Heart left ventricle (tissue), 16 donors: ENCODE measurements at regions of chr13 and their contacts with region 1.

Region 1: DNA sequence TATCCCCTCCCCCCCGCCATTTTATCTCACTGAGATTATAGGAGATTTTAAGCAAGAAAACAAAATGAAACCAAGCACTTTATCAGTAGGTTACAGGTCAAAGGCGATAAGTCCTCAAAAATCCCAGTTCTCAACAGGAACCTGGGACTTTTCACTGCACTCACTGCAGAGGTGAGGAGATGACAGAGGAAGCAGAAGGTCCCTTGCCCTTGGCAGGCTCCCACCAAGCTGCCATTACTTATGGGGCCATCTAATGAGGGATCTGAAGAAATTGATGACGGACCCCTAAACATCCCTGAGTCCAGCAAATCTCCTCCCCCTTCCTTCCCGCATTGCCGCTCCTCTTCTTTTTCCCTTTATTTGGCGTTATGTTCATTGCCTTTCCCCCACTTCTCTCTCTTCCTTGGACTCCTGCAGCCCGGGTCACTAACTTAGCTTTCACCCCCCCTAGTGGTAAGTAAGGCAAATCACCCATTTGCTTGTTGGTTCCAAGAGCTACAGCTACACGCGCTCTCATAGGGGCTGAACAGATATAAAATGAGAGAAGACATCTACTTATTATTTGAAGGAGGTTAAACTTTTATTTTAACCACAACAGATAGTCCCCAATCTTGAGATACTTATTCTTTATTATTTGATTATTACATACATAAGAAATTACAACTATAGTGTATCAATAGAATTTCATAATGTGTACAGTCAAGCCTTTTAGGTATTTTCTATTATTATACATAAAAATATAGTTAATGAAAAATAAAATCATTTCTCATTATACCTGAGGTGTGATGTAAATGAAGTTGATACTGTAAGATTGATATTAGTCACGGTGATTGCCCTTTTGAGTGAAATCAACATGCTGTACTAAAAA is 52.0 kb upstream of the ARGLU1 start:
- DNase-seq: peak in 2 of 5 donors; percentile 34 to 46
- ATAC-seq: peak; percentile 88 to 93 (median 89)
- H3K4me3 ChIP-seq: peak overlapping the region in 8 of 12 donors; percentile 18 to 38 (median 32)
- H3K27ac ChIP-seq: peak overlapping the region in 8 of 12 donors; percentile 8 to 65 (median 42)
- H3K4me1 ChIP-seq: peaks cover 0 to 20% (median 5%) of the 10 kb centered on the region in 12 donors
- H3K27me3 ChIP-seq: peaks cover 0 to 8% (median 0%) of the 10 kb centered on the region in 9 donors
- CTCF ChIP-seq: peak; percentile 61 to 89 (median 79)
- POLR2A ChIP-seq: no peak

Region 2: GRCh38 chr13:106083620-106084350 is 536.1 kb before region 1 on chr13:
- intact Hi-C with region 1: loop called in 1 of 10 experiments (anchors 10 kb)
- DNase-seq: peak in 2 of 5 donors; percentile 17 to 23
- ATAC-seq: peak in 3 of 4 donors; percentile 33 to 63 (median 52)
- H3K4me3 ChIP-seq: no peak overlapping the region
- H3K27ac ChIP-seq: no peak overlapping the region
- H3K4me1 ChIP-seq: peaks cover 0 to 3% (median 0%) of the 10 kb centered on the region in 12 donors
- H3K27me3 ChIP-seq: no peaks in the 10 kb centered on the region
- CTCF ChIP-seq: peak; percentile 27 to 74 (median 56)
- POLR2A ChIP-seq: no peak

Region 3: DNA sequence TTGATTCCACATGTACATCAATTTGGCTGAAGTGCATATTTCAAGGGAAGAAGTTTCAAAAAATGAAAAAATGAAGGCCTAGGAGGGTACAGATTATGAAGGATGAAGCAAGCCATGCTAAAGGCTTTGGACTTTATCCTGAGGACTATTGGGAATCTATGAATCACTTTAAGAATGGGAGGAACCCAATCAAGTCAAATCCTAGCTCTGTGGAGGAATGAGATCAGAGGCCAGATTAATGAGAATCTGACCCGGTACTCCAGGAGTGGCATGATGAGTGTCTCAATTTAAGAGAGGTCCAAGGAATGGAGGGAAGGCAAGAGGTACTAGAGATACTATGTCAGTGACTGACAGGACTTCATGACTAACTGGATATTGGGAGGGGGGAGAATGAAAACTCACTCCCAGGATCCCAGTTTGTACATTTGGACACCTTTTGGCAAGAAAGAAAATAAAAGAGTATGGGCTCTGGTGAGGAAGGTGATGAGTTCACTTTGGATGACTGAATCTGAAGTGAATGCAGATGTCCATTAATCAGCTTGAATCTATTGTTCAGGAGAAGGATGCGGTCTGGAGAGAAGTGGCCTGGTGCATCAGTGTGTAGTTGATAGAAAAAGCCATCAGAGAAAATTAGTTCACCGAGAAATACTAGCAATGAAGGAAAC is 433.4 kb before region 1 on chr13:
- intact Hi-C with region 1: no loop called
- DNase-seq: no peak
- ATAC-seq: no peak
- H3K4me3 ChIP-seq: no peak overlapping the region
- H3K27ac ChIP-seq: no peak overlapping the region
- H3K4me1 ChIP-seq: no peaks in the 10 kb centered on the region
- H3K27me3 ChIP-seq: no peaks in the 10 kb centered on the region
- CTCF ChIP-seq: no peak
- POLR2A ChIP-seq: no peak

Region 4: DNA sequence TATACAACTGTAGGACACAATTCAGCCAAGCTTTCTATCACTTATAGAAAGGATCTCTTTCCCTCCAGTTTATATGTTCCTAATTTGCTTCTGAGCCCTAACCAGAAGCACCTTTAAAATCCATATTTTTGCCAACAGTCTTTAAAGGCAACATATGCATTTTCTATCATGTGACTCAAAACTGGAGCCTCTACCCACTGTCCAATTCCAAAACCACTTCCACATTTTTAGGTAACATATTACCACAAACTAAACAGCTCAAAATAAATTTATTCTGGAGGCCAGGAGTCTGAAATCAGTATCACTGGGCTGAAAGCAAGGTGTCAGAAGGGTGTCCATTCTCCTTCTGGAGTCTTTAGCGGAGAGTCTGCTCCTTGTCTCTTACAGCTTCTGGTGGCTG is 68.6 kb before region 1 on chr13:
- intact Hi-C with region 1: loop called in 1 of 10 experiments (anchors 5 kb)
- DNase-seq: no peak
- ATAC-seq: peak in 1 of 4 donors; percentile 20
- H3K4me3 ChIP-seq: no peak overlapping the region
- H3K27ac ChIP-seq: peak overlapping the region in 3 of 12 donors; percentile 3 to 17 (median 13)
- H3K4me1 ChIP-seq: peaks cover 0 to 52% (median 28%) of the 10 kb centered on the region in 12 donors
- H3K27me3 ChIP-seq: no peaks in the 10 kb centered on the region
- CTCF ChIP-seq: no peak
- POLR2A ChIP-seq: no peak

Region 5: GRCh38 chr13:106567474-106568298 is 52.2 kb before region 1 on chr13 and contains the start of gene ARGLU1:
- intact Hi-C with region 1: loop called in 2 of 10 experiments (anchors 5 kb)
- DNase-seq: peak; percentile 94 to 97 (median 95)
- ATAC-seq: peak; percentile 93 to 97 (median 94)
- H3K4me3 ChIP-seq: peak within 1 kb of the TSS; percentile 72 to 98 (median 95)
- H3K27ac ChIP-seq: peak within 1 kb of the TSS; percentile 96 to 100 (median 98)
- H3K4me1 ChIP-seq: peaks cover 0 to 55% (median 40%) of the 10 kb centered on the region in 12 donors
- H3K27me3 ChIP-seq: no peaks in the 10 kb centered on the region
- CTCF ChIP-seq: no peak
- POLR2A ChIP-seq: peak; percentile 47 to 94
- total RNA-seq, gene ARGLU1: 14.2 to 35.6 (median 28.1) TPM

Region 6: GRCh38 chr13:106575896-106576295 is 44.0 kb before region 1 on chr13:
- intact Hi-C with region 1: loop called in 1 of 10 experiments (anchors 5 kb)
- DNase-seq: no peak
- ATAC-seq: no peak
- H3K4me3 ChIP-seq: no peak overlapping the region
- H3K27ac ChIP-seq: no peak overlapping the region
- H3K4me1 ChIP-seq: peaks cover 0 to 8% (median 0%) of the 10 kb centered on the region in 12 donors
- H3K27me3 ChIP-seq: no peaks in the 10 kb centered on the region
- CTCF ChIP-seq: no peak
- POLR2A ChIP-seq: no peak

Region 7: DNA sequence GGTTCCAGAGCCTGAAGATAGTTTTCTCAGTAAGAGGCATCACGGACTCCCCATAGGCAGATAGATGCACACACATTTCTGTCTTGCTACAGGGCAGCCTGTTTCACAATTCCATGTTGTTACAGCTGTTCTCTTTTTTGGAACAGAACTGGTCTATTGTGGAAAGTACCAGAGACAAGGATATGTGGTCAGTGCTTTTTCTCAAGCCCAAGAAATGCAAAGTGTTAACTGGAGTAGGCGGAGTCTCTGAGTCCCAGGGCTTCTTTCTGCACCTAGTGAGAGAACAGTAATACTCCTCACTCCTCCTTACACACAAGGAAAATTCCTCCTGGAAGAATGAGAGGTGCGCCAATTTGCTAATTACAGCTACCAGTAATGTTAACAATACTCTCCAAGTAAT is 89.6 kb after region 1 on chr13:
- intact Hi-C with region 1: loop called in 1 of 10 experiments (anchors 5 kb)
- DNase-seq: peak in 2 of 5 donors; percentile 26 to 41
- ATAC-seq: peak; percentile 32 to 93 (median 86)
- H3K4me3 ChIP-seq: peak overlapping the region in 10 of 12 donors; percentile 1 to 51 (median 36)
- H3K27ac ChIP-seq: peak overlapping the region; percentile 65 to 88 (median 82)
- H3K4me1 ChIP-seq: peaks cover 0 to 51% (median 8%) of the 10 kb centered on the region in 12 donors
- H3K27me3 ChIP-seq: no peaks in the 10 kb centered on the region
- CTCF ChIP-seq: no peak
- POLR2A ChIP-seq: no peak

Region 8: GRCh38 chr13:107124129-107124718 is 504.3 kb after region 1 on chr13:
- intact Hi-C with region 1: loop called in 1 of 10 experiments (anchors 10 kb)
- DNase-seq: no peak
- ATAC-seq: no peak
- H3K4me3 ChIP-seq: no peak overlapping the region
- H3K27ac ChIP-seq: no peak overlapping the region
- H3K4me1 ChIP-seq: peaks cover 0 to 5% (median 0%) of the 10 kb centered on the region in 12 donors
- H3K27me3 ChIP-seq: no peaks in the 10 kb centered on the region
- CTCF ChIP-seq: peak; percentile 40 to 80 (median 68)
- POLR2A ChIP-seq: no peak